CD4-positive, alpha-beta memory T cell (primary cell): ENCODE measurements at regions of chr2 and their contacts with region 1.

Region 1: GRCh38 chr2:101770726-101771125 is 73.2 kb downstream of the MAP4K4 start:
- DNase-seq: no peak
- H3K4me3 ChIP-seq: no peak overlapping the region
- H3K4me3 Mint-ChIP-seq: peak overlapping the region in 4 of 8 donors; percentile 27 to 66 (median 54)
- H3K27ac ChIP-seq: no peak overlapping the region
- H3K27ac Mint-ChIP-seq: peak overlapping the region in 2 of 7 donors; percentile 12 to 57
- H3K4me1 ChIP-seq: peaks cover 90% of the 10 kb centered on the region
- H3K4me1 Mint-ChIP-seq: peaks cover 69 to 95% (median 82%) of the 10 kb centered on the region in 4 donors
- H3K27me3 ChIP-seq: no peaks in the 10 kb centered on the region
- H3K27me3 Mint-ChIP-seq: no peaks in the 10 kb centered on the region

Region 2: DNA sequence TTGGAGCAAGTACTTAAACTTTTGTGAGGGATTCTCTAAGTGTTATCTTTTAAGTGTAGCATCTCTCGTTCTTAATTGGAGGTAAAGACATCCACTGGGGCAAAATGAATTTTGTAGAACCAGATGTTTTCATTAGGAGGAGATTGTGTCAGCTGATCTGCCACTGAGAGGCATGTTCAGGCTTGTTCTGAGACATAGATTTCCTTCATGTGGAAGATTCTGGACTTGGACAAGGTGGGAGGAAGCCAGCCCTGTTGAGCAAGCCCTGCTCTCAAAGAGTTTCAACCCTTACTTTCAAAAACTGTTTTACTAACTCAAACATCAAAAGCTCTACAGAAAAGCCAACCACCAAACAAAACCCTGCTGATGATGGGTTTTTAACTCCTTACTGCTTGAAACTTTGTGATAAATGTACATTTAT is 66.7 kb before region 1 on chr2:
- CTCF ChIA-PET with region 1: interaction called, 7 read pairs
- POLR2A ChIA-PET with region 1: interaction called, 3 read pairs
- intact Hi-C with region 1: loop called (anchors 5 kb)
- DNase-seq: peak in 3 of 5 donors; percentile 44 to 45 (median 44)
- H3K4me3 ChIP-seq: no peak overlapping the region
- H3K4me3 Mint-ChIP-seq: peak overlapping the region; percentile 64 to 94 (median 90)
- H3K27ac ChIP-seq: peak overlapping the region; percentile 58
- H3K27ac Mint-ChIP-seq: peak overlapping the region; percentile 90 to 99 (median 96)
- H3K4me1 ChIP-seq: peaks cover 95% of the 10 kb centered on the region
- H3K4me1 Mint-ChIP-seq: peaks cover 12 to 67% (median 54%) of the 10 kb centered on the region in 4 donors
- H3K27me3 ChIP-seq: no peaks in the 10 kb centered on the region
- H3K27me3 Mint-ChIP-seq: no peaks in the 10 kb centered on the region

Region 3: GRCh38 chr2:101781326-101781725 is 10.6 kb after region 1 on chr2:
- CTCF ChIA-PET with region 1: interaction called, 14 read pairs
- POLR2A ChIA-PET with region 1: interaction called, 3 read pairs
- intact Hi-C with region 1: loop called (anchors 2 kb)
- DNase-seq: no peak
- H3K4me3 ChIP-seq: no peak overlapping the region
- H3K4me3 Mint-ChIP-seq: peak overlapping the region in 7 of 8 donors; percentile 29 to 76 (median 39)
- H3K27ac ChIP-seq: no peak overlapping the region
- H3K27ac Mint-ChIP-seq: peak overlapping the region in 6 of 7 donors; percentile 2 to 83 (median 24)
- H3K4me1 ChIP-seq: peaks cover 78% of the 10 kb centered on the region
- H3K4me1 Mint-ChIP-seq: peaks cover 63 to 94% (median 82%) of the 10 kb centered on the region in 4 donors
- H3K27me3 ChIP-seq: no peaks in the 10 kb centered on the region
- H3K27me3 Mint-ChIP-seq: no peaks in the 10 kb centered on the region